ENCODE measurements at regions of chr1 and their contacts with region 1.

Region 1: DNA sequence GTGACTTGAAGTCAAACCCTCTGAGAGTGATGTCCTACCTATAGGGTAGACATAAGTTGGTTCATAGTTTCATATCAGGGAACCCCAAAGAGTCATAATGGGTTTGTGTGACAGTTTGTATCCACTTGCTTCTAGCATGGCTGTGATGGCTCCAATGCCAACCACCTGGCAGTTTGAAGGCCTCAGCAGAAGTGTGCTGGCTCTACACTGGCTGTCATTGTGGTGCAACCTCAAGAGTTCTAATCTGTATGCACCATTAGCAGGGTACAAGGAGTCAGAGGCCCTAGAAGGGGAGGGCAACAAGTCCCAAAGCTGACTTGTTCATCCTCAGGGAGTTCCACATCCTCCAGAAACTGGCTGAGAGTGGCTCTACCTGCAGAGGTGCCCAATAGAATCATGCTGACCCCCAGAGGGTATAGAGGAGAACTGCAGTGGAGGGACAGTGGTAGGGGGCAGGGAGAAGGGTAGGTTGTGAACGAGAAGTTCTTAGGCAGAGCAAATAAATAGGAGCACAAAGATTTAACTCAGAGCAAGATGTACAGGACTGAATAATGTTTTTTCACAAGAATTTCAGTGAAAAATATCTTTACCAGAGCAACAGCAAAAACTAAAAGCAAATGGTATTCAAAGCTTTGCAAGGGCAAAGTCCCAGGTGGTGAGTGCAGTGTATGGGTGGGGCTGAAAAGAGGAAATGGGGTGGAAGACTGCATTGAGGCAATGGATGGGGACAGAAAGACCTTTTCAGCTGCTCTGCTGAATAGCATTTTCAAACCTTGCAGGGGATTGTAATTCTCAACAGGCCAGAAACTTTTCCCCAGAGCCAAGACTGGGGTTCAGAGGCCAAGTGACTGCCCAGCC is 3.2 kb downstream of the FCRL2 start:
- DNase-seq: no peak
- ATAC-seq: peak; percentile 80
- H3K4me3 Mint-ChIP-seq: peak overlapping the region; percentile 79
- H3K27ac Mint-ChIP-seq: peak overlapping the region; percentile 87
- H3K4me1 Mint-ChIP-seq: peaks cover 97% of the 10 kb centered on the region
- H3K27me3 Mint-ChIP-seq: no peaks in the 10 kb centered on the region
- CTCF ChIP-seq: peak; percentile 34

Region 2: DNA sequence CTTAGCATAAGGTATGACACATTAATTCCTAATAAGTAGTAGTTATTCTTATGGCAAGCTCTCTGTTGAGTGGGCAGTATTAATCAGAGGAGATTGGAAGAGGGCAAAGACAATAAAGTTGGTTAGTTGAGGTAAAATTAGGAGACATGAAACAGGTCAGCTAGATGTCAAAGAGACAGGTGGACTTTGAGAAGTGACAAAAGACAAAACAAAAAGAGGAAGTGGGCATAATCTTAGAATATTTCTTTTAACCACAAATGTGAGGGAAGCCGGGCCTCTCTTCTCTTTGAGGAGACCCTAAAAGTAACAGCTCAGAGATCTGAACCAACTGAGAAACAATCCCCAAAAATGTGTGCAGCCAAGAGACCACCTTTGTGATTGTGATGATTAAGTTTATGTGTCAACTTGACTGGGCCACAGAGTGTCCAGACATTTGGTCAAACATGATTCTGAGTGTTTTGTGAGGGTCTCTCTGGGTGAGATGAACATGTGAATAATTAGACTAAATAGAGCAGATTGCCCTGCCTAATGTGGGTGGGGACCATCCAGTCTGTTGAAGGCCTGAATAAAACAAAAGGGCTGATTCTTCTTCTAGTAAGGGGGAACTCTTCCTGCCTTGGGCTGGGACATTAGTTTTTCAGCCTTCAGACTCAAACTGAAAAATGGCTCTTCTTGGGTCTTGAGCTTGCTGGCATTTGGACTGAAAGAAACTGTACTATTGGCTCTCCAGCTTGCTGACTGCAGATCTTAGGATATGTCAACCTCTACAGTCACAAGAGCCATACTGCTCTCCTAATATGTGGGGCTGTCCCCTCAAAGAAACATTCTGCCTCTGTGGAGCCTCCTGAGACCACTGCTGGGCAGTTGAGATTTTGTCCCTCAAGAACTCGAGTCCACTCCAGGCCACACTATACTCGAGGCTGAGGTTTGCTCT is 261.4 kb before region 1 on chr1:
- CTCF ChIA-PET with region 1: interaction called, 4 read pairs
- POLR2A ChIA-PET with region 1: no interaction called
- intact Hi-C with region 1: loop called (anchors 5 kb)
- DNase-seq: no peak
- ATAC-seq: peak; percentile 47
- H3K4me3 Mint-ChIP-seq: peak overlapping the region; percentile 7
- H3K27ac Mint-ChIP-seq: peak overlapping the region; percentile 38
- H3K4me1 Mint-ChIP-seq: peaks cover 57% of the 10 kb centered on the region
- H3K27me3 Mint-ChIP-seq: no peaks in the 10 kb centered on the region
- CTCF ChIP-seq: no peak

Region 3: DNA sequence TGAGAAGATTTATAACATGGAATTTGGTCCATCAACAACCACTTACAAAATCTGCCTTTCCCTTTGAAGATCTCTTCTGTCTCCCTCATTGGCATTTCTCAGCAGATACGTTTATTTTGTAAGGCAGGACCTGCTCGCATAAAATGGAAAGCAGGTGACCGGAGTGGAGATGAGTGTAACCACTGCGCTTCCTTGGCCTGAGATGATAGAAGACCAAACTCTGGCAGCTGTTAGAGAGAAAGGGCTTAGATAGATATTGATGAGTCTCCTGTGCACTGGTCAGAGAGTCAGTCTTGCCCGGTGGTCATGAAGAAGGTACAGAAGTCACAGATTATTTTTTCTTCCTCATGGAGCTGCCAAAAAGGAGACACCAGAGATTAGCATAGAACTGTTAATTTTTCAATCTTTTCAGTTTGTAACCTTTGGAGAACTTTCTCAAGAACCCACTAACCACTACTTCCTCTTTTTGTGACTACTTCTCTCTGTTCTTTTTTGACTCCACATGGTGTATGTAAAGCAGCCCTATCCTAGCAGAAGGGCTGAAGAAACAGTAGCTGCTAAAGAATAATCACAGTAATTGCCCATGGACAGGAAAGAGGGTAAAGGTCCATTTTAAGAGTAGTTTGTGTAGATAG is 120.7 kb before region 1 on chr1:
- CTCF ChIA-PET with region 1: interaction called, 4 read pairs
- POLR2A ChIA-PET with region 1: no interaction called
- intact Hi-C with region 1: loop called (anchors 2 kb)
- DNase-seq: no peak
- ATAC-seq: peak; percentile 90
- H3K4me3 Mint-ChIP-seq: peak overlapping the region; percentile 69
- H3K27ac Mint-ChIP-seq: peak overlapping the region; percentile 82
- H3K4me1 Mint-ChIP-seq: peaks cover 44% of the 10 kb centered on the region
- H3K27me3 Mint-ChIP-seq: no peaks in the 10 kb centered on the region
- CTCF ChIP-seq: no peak

Region 4: DNA sequence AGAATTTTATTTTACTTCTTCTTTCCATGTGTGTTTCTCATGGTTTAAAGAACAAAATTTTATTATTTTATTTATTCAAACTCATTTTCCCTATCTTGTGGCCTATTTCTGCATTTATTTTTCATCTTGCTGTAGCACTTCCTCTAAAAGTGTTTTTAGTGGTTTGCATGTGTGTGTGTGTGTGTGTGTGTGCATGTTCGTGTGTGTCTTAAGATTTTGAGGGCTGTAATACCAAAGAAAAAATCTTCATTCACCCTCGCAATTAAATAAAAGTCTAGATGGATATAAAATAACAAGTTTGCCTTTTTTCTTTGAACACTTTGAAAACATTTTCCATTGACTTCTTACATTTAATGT is 48.5 kb before region 1 on chr1:
- CTCF ChIA-PET with region 1: interaction called, 17 read pairs
- POLR2A ChIA-PET with region 1: interaction called, 9 read pairs
- intact Hi-C with region 1: loop called (anchors 2 kb)
- DNase-seq: no peak
- ATAC-seq: peak; percentile 17
- H3K4me3 Mint-ChIP-seq: peak overlapping the region; percentile 16
- H3K27ac Mint-ChIP-seq: peak overlapping the region; percentile 97
- H3K4me1 Mint-ChIP-seq: peaks cover 71% of the 10 kb centered on the region
- H3K27me3 Mint-ChIP-seq: no peaks in the 10 kb centered on the region
- CTCF ChIP-seq: no peak

Region 5: GRCh38 chr1:157849229-157849875 is 75.6 kb after region 1 on chr1:
- CTCF ChIA-PET with region 1: interaction called, 4 read pairs
- POLR2A ChIA-PET with region 1: interaction called, 4 read pairs
- intact Hi-C with region 1: loop called (anchors 2 kb)
- DNase-seq: no peak
- ATAC-seq: peak; percentile 87
- H3K4me3 Mint-ChIP-seq: peak overlapping the region; percentile 81
- H3K27ac Mint-ChIP-seq: peak overlapping the region; percentile 94
- H3K4me1 Mint-ChIP-seq: peaks cover 64% of the 10 kb centered on the region
- H3K27me3 Mint-ChIP-seq: no peaks in the 10 kb centered on the region
- CTCF ChIP-seq: no peak